ENCODE measurements at regions of chr17 and their contacts with region 1.

Region 1: DNA sequence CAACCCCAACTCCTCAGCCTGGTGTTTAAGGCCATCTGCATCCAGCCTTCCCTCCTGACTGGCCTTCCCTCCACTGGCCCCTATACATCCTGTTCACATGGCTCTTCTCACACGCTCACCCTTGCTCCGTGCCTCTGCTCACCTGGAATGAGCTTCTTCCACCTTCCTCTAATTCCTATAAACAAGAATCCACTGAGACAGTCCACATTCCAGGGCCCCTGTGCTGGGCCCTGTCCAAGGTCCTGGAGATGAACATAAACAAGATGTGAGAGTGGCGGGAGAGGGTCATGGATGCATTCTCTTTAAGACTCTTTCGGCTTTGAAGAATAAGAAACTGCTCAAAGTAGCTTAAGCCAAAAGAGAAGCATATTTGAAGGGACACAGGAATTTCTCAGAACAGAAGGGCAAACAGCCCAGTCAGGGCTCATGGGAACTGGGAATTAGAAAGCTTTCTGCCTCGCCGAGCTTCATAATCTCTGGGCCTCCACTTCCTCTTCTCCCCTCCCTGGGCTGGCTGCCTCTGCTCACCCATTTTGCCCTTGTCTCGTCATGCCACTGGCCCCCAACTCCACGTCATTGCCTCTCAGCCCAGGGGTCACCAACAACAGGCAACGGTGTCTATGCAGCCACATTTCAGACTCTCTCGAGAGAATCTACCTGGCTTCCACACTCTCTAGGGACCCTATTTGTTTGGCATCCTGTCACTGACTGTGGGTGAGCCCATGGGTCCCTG is 13.5 kb downstream of the SPPL2C start:
- DNase-seq: peak; percentile 24
- H3K4me3 ChIP-seq: no peak overlapping the region
- H3K27ac ChIP-seq: no peak overlapping the region
- H3K4me1 ChIP-seq: no peaks in the 10 kb centered on the region
- H3K27me3 ChIP-seq: no peaks in the 10 kb centered on the region
- CTCF ChIP-seq: no peak

Region 2: DNA sequence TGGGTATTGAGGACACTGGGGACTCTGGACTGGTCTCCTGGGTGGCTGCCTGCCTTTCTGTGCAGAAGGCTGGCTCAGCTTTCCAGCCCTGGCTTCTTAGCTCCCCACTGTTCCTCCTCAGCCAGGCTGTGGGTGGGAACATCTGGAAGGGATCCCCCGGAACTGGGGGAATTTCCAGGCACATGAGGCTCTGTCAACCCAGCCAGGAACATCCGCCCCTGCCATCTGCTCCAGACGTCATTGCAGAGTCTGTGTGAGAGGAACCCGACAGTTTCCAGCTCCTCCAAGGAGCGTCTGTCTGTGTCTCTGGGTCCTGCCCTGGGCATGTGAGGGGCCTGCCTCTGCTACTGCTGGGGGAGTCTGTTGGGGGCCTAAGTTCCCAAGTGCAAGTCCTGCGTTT is 110.2 kb before region 1 on chr17:
- CTCF ChIA-PET with region 1: no interaction called
- dilution Hi-C with region 1: loop called (anchors 5 kb)
- in situ Hi-C with region 1: no loop called
- intact Hi-C with region 1: no loop called
- DNase-seq: no peak
- H3K4me3 ChIP-seq: no peak overlapping the region
- H3K27ac ChIP-seq: no peak overlapping the region
- H3K4me1 ChIP-seq: no peaks in the 10 kb centered on the region
- H3K27me3 ChIP-seq: peaks cover 2% of the 10 kb centered on the region
- CTCF ChIP-seq: no peak

Region 3: GRCh38 chr17:45794840-45795239 is 63.3 kb before region 1 on chr17:
- CTCF ChIA-PET with region 1: no interaction called
- dilution Hi-C with region 1: no loop called
- in situ Hi-C with region 1: no loop called
- intact Hi-C with region 1: no loop called
- DNase-seq: no peak
- H3K4me3 ChIP-seq: no peak overlapping the region
- H3K27ac ChIP-seq: no peak overlapping the region
- H3K4me1 ChIP-seq: no peaks in the 10 kb centered on the region
- H3K27me3 ChIP-seq: peaks cover 4% of the 10 kb centered on the region
- CTCF ChIP-seq: peak; percentile 3 to 41